AG04449 (cell line): ENCODE measurements at regions of chr1 and their contacts with region 1.

Region 1: GRCh38 chr1:208081972-208082371 is 162.2 kb downstream of the PLXNA2 start:
- DNase-seq: no peak
- H3K4me3 ChIP-seq: no peak overlapping the region
- CTCF ChIP-seq: peak; percentile 16

Region 2: GRCh38 chr1:208071435-208072031 is 10.4 kb before region 1 on chr1:
- CTCF ChIA-PET with region 1: interaction called, 21 read pairs
- POLR2A ChIA-PET with region 1: no interaction called
- DNase-seq: no peak
- H3K4me3 ChIP-seq: no peak overlapping the region
- CTCF ChIP-seq: no peak